CD8-positive, alpha-beta memory T cell (primary cell): ENCODE measurements at regions of chr1 and their contacts with region 1.

Region 1: GRCh38 chr1:151106894-151107293 is 36.3 kb downstream of the GABPB2 start:
- DNase-seq: no peak
- H3K4me3 ChIP-seq: no peak overlapping the region
- H3K4me3 Mint-ChIP-seq: no peak overlapping the region
- H3K27ac ChIP-seq: no peak overlapping the region
- H3K27ac Mint-ChIP-seq: peak overlapping the region in 3 of 8 donors; percentile 11 to 35 (median 24)
- H3K4me1 ChIP-seq: no peaks in the 10 kb centered on the region
- H3K4me1 Mint-ChIP-seq: peaks cover 0 to 3% (median 1%) of the 10 kb centered on the region in 3 donors
- H3K27me3 ChIP-seq: no peaks in the 10 kb centered on the region
- H3K27me3 Mint-ChIP-seq: no peaks in the 10 kb centered on the region

Region 2: GRCh38 chr1:151133011-151133806 is 26.3 kb after region 1 on chr1:
- CTCF ChIA-PET with region 1: no interaction called
- POLR2A ChIA-PET with region 1: no interaction called
- DNase-seq: no peak
- H3K4me3 ChIP-seq: no peak overlapping the region
- H3K4me3 Mint-ChIP-seq: no peak overlapping the region
- H3K27ac ChIP-seq: no peak overlapping the region
- H3K27ac Mint-ChIP-seq: no peak overlapping the region
- H3K4me1 ChIP-seq: peaks cover 11% of the 10 kb centered on the region
- H3K4me1 Mint-ChIP-seq: peaks cover 9 to 12% (median 11%) of the 10 kb centered on the region in 3 donors
- H3K27me3 ChIP-seq: no peaks in the 10 kb centered on the region
- H3K27me3 Mint-ChIP-seq: peaks cover 8 to 13% of the 10 kb centered on the region in 2 donors

Region 3: GRCh38 chr1:151156515-151156819 is 49.6 kb after region 1 on chr1 and contains the start of gene TNFAIP8L2:
- CTCF ChIA-PET with region 1: interaction called, 90 read pairs
- POLR2A ChIA-PET with region 1: no interaction called
- DNase-seq: peak; percentile 51 to 78 (median 65)
- H3K4me3 ChIP-seq: peak within 1 kb of the TSS; percentile 87
- H3K4me3 Mint-ChIP-seq: peak within 1 kb of the TSS; percentile 97 to 100 (median 99)
- H3K27ac ChIP-seq: peak within 1 kb of the TSS; percentile 49
- H3K27ac Mint-ChIP-seq: peak within 1 kb of the TSS; percentile 82 to 98 (median 95)
- H3K4me1 ChIP-seq: peaks cover 39% of the 10 kb centered on the region
- H3K4me1 Mint-ChIP-seq: peaks cover 42 to 59% (median 52%) of the 10 kb centered on the region in 3 donors
- H3K27me3 ChIP-seq: no peaks in the 10 kb centered on the region
- H3K27me3 Mint-ChIP-seq: no peaks in the 10 kb centered on the region
- total RNA-seq, gene TNFAIP8L2: 24.6 to 25.5 TPM